ENCODE measurements at regions of chr1 and their contacts with region 1.

Region 1: GRCh38 chr1:89454845-89455521 is 69.6 kb upstream of the LRRC8B start:
- DNase-seq: peak; percentile 51
- H3K4me3 Mint-ChIP-seq: no peak overlapping the region
- H3K27ac Mint-ChIP-seq: no peak overlapping the region
- H3K4me1 Mint-ChIP-seq: peaks cover 21% of the 10 kb centered on the region
- H3K27me3 Mint-ChIP-seq: peaks cover 25% of the 10 kb centered on the region

Region 2: DNA sequence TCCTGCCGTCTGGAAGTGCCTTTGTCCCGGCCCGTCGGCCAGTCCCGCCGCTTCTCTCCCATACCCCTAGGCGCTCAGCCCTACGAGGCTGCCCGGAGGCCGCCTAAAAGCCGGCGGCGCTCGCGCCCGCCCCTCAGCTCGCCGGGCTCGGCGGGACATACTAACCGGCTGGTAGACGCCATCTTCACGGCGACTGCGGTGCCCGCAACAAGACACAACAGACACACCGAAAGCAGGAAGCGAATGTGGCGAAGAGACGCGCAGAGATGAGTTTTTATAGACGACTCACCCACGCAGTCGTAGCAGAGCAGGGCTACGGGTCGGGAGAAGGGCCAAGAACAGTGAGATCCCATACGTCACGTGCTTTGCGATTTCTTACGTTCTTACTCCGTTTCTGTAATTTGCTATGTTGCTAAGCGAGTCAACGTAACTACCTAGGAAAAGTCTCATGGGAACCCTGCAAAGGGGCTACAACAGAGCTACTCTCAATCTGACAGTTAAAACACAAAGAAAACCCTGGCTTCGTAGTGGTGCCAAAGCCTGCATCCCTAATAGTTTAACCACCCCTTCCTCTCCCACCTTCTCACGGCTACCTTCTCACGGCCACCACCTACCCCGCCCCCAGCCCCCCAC is 563.5 kb before region 1 on chr1 and contains the start of gene GTF2B:
- intact Hi-C with region 1: loop called (anchors 5 kb)
- DNase-seq: peak; percentile 92
- H3K4me3 Mint-ChIP-seq: peak within 1 kb of the TSS; percentile 92
- H3K27ac Mint-ChIP-seq: peak within 1 kb of the TSS; percentile 95
- H3K4me1 Mint-ChIP-seq: peaks cover 49% of the 10 kb centered on the region
- H3K27me3 Mint-ChIP-seq: no peaks in the 10 kb centered on the region
- total RNA-seq, gene GTF2B: 45.5 and 49.1 TPM in 2 replicates

Region 3: DNA sequence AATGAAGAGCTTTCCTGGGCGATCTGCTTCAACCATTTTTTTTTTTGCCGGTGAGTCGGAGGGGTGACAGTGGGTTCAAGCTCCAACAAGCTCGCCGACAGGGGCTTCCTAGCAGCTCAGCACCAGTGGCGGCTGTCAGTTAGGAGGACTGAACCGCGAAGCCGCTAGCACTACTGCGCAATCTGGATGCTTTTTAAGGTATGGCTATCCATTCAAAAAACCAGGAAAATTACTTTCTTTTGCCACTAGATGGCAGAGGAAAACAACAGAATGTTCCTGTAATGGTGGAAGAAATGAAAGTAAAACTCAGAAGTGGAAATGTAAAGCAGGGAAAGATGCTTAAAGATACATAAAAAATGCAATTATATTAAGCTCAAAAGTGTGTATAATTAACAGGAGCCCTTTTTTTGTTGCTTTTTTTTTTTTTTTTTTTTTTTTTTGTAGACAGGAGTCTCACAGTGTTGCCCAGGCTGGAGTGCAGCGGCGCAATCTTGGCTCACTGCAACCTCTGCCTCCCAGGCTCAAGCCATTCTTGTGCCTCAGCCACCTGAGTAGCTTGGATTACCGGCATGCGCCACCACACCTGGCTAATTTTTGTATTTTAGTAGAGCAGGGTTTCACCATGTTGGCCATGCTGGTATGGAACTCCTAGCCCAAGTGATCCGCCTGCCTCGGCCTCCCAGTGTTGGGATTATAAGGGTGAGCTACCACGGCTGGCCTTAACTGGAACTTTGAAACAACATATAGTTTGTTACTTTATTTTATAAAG is 471.0 kb before region 1 on chr1:
- intact Hi-C with region 1: loop called (anchors 1 kb)
- DNase-seq: no peak
- H3K4me3 Mint-ChIP-seq: peak overlapping the region; percentile 31
- H3K27ac Mint-ChIP-seq: peak overlapping the region; percentile 45
- H3K4me1 Mint-ChIP-seq: peaks cover 86% of the 10 kb centered on the region
- H3K27me3 Mint-ChIP-seq: no peaks in the 10 kb centered on the region

Region 4: GRCh38 chr1:89085781-89086180 is 369.2 kb before region 1 on chr1:
- intact Hi-C with region 1: loop called (anchors 1 kb)
- DNase-seq: peak; percentile 47
- H3K4me3 Mint-ChIP-seq: no peak overlapping the region
- H3K27ac Mint-ChIP-seq: no peak overlapping the region
- H3K4me1 Mint-ChIP-seq: peaks cover 8% of the 10 kb centered on the region
- H3K27me3 Mint-ChIP-seq: peaks cover 2% of the 10 kb centered on the region

Region 5: GRCh38 chr1:89259283-89259971 is 195.6 kb before region 1 on chr1:
- intact Hi-C with region 1: loop called (anchors 5 kb)
- DNase-seq: peak; percentile 43
- H3K4me3 Mint-ChIP-seq: peak overlapping the region; percentile 76
- H3K27ac Mint-ChIP-seq: peak overlapping the region; percentile 94
- H3K4me1 Mint-ChIP-seq: peaks cover 76% of the 10 kb centered on the region
- H3K27me3 Mint-ChIP-seq: no peaks in the 10 kb centered on the region

Region 6: GRCh38 chr1:89310505-89310904 is 144.5 kb before region 1 on chr1:
- intact Hi-C with region 1: loop called (anchors 5 kb)
- DNase-seq: no peak
- H3K4me3 Mint-ChIP-seq: peak overlapping the region; percentile 47
- H3K27ac Mint-ChIP-seq: peak overlapping the region; percentile 87
- H3K4me1 Mint-ChIP-seq: peaks cover 64% of the 10 kb centered on the region
- H3K27me3 Mint-ChIP-seq: no peaks in the 10 kb centered on the region

Region 7: DNA sequence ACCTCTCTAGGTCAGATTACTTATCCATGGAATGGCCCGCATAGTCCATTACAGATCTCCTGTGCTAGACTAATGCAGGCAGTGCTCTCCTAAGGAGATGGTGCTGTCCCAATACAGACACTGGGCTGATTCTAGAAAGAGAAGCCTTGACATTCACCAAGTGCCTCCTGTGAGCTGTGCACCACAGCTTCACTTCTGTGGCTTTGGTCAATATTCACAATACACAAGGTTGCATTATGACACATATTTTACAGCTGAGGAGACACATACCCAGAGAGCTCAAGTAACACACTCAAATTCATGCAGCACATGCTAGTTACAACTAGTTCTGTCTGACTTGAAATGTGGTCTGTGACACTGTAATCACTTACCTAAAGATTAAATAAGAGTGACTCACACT is 10.2 kb after region 1 on chr1:
- intact Hi-C with region 1: loop called (anchors 1 kb)
- DNase-seq: no peak
- H3K4me3 Mint-ChIP-seq: no peak overlapping the region
- H3K27ac Mint-ChIP-seq: no peak overlapping the region
- H3K4me1 Mint-ChIP-seq: peaks cover 40% of the 10 kb centered on the region
- H3K27me3 Mint-ChIP-seq: peaks cover 53% of the 10 kb centered on the region

Measured in activated T-helper 1 cell treated with anti-CD3 and anti-CD28 coated beads, Interleukin-12 subunit alpha, Interleukin-12 subunit beta, Interleukin-2, Interleukin-4 antibody, amounts not matched to agents 30 ng/mL and 10 ng/mL and 1 ng/mL, durations not matched to agents 14 hours and 24 hours and 36 hours (primary cell).